ENCODE measurements at regions of chr1 and their contacts with region 1.

Region 1: DNA sequence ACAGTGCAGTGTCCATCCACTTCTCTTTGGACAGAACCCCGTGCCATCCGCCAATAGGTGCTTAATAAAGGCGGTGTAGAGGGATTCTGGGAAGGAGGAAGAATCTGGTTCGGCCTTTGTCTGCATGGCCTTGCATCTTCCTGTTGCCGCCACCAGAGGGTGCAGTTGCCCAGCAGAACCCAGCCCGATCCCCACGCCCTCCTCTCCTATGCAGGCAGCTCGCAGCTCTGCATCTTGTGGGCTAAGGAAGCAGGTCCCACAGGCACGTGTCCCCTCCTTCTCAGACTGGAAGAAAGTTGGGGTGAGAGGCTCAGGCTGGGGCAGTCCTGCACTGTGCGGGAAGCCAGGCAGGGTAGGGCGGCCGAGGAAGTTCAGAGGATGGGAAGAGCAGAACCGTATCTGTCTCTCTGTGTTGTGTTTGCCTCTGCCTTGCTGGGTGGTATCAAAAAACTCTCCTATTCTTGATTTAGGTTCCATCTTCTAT is 20.8 kb downstream of the NAV1 start:
- DNase-seq: peak; percentile 73
- ATAC-seq: peak; percentile 89
- H3K4me3 ChIP-seq: no peak overlapping the region
- H3K4me3 Mint-ChIP-seq: no peak overlapping the region
- H3K27ac ChIP-seq: no peak overlapping the region
- H3K27ac Mint-ChIP-seq: no peak overlapping the region
- H3K4me1 ChIP-seq: peaks cover 0 to 4% of the 10 kb centered on the region in 2 donors
- H3K4me1 Mint-ChIP-seq: peaks cover 2% of the 10 kb centered on the region
- H3K27me3 ChIP-seq: no peaks in the 10 kb centered on the region
- H3K27me3 Mint-ChIP-seq: peaks cover 7% of the 10 kb centered on the region
- CTCF ChIP-seq: peak; percentile 95

Region 2: DNA sequence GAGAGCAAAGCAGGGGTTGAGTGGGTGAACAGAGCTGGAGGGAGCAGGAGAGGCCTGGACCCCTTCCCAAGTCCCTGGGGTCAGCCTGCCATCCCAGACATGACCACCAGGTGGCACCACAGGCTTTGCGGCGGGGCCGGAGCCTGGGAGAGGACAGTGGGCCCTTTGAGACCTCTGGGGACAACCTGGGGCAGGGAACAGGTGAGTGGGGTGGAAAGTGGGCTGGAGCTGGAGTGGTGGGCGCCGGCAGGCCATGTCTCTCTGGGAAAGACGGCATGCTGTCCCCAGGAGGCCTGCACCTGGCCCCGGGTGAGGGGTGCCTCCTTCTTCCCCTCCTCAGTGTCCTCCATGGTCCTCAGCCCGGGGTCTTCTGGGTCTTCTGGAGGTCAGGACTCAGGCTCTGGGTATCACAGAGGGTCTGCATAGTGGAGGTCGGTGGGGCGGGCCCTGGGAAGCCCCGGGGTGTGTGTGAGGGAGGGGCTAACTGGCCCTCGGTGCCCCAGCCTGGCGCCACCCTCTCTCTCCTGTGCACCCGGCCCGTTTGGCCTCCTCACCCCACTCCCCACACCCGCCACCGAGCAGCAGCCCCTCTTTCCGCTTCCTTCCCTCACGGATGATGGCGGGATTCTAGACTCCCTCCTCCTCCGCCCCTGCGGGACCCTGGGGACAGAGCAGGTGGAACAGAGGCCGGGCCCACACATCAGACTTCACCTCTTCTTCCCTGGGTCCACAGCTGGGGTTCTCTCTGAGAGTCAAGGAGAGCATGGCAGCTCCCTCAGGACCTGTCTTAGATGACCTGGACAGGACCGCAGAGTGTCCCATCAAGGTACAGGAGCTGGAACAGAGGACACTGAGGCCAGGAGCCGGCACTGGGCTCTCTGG is 304.9 kb before region 1 on chr1:
- CTCF ChIA-PET with region 1: no interaction called
- POLR2A ChIA-PET with region 1: no interaction called
- intact Hi-C with region 1: no loop called
- DNase-seq: peak; percentile 50
- ATAC-seq: peak; percentile 62
- H3K4me3 ChIP-seq: no peak overlapping the region
- H3K4me3 Mint-ChIP-seq: no peak overlapping the region
- H3K27ac ChIP-seq: no peak overlapping the region
- H3K27ac Mint-ChIP-seq: no peak overlapping the region
- H3K4me1 ChIP-seq: no peaks in the 10 kb centered on the region
- H3K4me1 Mint-ChIP-seq: no peaks in the 10 kb centered on the region
- H3K27me3 ChIP-seq: peaks cover 0 to 17% (median 0%) of the 10 kb centered on the region in 4 experiments
- H3K27me3 Mint-ChIP-seq: peaks cover 7% of the 10 kb centered on the region
- CTCF ChIP-seq: peak; percentile 91

Region 3: DNA sequence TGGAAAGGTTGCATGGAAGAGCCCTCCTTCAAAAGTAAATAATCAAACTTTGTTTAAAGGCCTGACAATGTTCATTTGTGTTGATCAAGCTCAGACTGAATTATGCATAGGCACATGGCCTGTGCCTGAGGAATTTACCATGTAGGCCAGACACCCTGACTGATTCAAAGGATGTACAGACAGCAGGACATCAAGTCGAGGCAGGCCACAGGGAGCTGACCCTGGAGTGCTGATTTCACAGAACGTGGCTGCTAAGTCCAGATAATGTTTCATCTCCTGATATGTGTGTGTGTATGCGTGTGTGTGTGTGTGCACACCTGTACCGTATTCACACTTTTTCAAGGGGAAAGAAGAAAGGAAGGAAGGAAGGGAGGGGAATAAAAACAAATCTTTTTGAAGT is 13.3 kb after region 1 on chr1:
- CTCF ChIA-PET with region 1: interaction called, 13 read pairs
- POLR2A ChIA-PET with region 1: no interaction called
- intact Hi-C with region 1: no loop called
- DNase-seq: no peak
- ATAC-seq: no peak
- H3K4me3 ChIP-seq: no peak overlapping the region
- H3K4me3 Mint-ChIP-seq: no peak overlapping the region
- H3K27ac ChIP-seq: no peak overlapping the region
- H3K27ac Mint-ChIP-seq: no peak overlapping the region
- H3K4me1 ChIP-seq: no peaks in the 10 kb centered on the region
- H3K4me1 Mint-ChIP-seq: no peaks in the 10 kb centered on the region
- H3K27me3 ChIP-seq: no peaks in the 10 kb centered on the region
- H3K27me3 Mint-ChIP-seq: peaks cover 3% of the 10 kb centered on the region
- CTCF ChIP-seq: no peak

Region 4: DNA sequence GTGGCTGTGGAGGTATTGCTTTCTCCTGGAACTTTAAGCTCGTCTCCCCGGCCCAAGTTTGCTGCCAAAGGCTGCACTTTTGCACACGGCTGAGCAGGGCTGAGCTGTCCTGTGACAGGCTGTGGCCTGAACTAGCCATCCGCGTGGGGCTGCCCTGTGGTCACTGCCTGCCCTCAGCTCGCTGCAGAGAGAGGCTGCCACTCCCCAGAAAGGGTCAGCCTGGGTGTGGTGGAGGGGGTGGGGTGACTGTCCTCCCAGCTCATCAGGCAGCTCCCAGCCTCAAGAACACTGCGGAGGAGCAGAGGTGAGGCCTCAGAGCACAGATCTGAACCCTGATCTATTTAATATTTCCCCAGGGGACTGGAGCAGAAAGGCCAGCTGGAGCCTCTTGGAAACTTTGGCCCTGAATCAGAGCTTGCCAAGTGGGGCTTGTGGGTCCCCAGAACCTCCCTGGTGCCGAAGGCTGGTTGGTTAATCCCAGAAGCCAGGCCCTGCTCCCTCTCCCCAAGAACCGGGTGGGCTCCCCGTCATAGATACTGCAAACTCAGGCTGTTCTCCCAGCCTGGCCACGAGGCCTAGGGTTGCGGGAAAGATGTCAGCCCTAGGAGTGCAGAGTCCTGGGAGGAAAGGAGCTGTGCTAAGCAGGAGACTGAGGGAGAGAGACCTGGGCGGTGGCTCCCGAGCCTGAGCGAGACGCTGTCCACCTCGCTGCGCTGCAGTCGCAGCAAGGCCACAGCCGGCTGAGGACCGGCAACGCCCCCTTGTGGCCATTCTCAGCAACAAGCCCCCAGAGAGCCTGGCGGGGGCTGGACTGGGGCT is 144.1 kb after region 1 on chr1:
- CTCF ChIA-PET with region 1: interaction called, 17 read pairs
- POLR2A ChIA-PET with region 1: no interaction called
- intact Hi-C with region 1: no loop called
- DNase-seq: peak; percentile 67
- ATAC-seq: peak; percentile 64
- H3K4me3 ChIP-seq: no peak overlapping the region
- H3K4me3 Mint-ChIP-seq: no peak overlapping the region
- H3K27ac ChIP-seq: no peak overlapping the region
- H3K27ac Mint-ChIP-seq: no peak overlapping the region
- H3K4me1 ChIP-seq: peaks cover 0 to 4% of the 10 kb centered on the region in 2 donors
- H3K4me1 Mint-ChIP-seq: no peaks in the 10 kb centered on the region
- H3K27me3 ChIP-seq: peaks cover 0 to 11% (median 5%) of the 10 kb centered on the region in 4 experiments
- H3K27me3 Mint-ChIP-seq: peaks cover 7% of the 10 kb centered on the region
- CTCF ChIP-seq: peak; percentile 78